ENCODE measurements at regions of chr10 and their contacts with region 1.

Region 1: GRCh38 chr10:110535958-110536891 is 31.3 kb upstream of the SMC3 start:
- DNase-seq: peak; percentile 36
- ATAC-seq: peak; percentile 76

Region 2: DNA sequence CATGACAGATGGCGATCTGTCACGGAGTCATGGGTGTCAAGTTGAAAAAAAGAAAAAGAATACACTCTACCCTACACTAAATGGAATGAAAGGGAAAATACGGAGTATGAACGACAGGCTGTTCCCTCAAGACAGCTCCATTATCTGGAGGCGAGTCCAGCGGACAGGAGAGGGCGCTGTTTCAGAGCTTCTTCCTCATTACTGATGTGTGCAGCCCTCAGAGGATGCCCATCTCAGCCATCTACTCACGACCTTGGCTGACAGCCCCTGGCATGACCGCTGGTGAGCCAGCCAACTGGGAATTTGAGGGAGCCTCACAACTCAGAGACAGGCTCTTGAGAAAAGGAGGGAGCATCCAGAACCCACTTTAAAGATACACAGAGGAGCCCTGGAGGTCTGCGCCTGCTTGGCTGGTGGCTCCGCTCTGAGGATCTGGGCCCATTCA is 181.9 kb before region 1 on chr10:
- intact Hi-C with region 1: loop called (anchors 5 kb)
- DNase-seq: peak; percentile 86
- ATAC-seq: peak; percentile 87

Measured in left ventricle myocardium superior (tissue), 1 donor.